Heart left ventricle (tissue), 16 donors: ENCODE measurements at regions of chr10 and their contacts with region 1.

Region 1: GRCh38 chr10:129963641-129964501 is at the start of gene EBF3:
- DNase-seq: peak; percentile 88 to 94 (median 91)
- ATAC-seq: peak; percentile 83 to 87 (median 83)
- H3K4me3 ChIP-seq: peak within 1 kb of the TSS; percentile 63 to 93 (median 73)
- H3K27ac ChIP-seq: peak within 1 kb of the TSS; percentile 79 to 94 (median 90)
- H3K4me1 ChIP-seq: peaks cover 0 to 53% (median 8%) of the 10 kb centered on the region in 12 donors
- H3K27me3 ChIP-seq: peaks cover 16 to 98% (median 56%) of the 10 kb centered on the region in 9 donors
- CTCF ChIP-seq: peak in 1 of 12 donors; percentile 8
- POLR2A ChIP-seq: peak; percentile 67 to 98
- total RNA-seq, gene EBF3: 3.6 to 8.8 (median 7.2) TPM

Region 2: GRCh38 chr10:129258283-129258923 is 705.5 kb before region 1 on chr10:
- intact Hi-C with region 1: loop called in 1 of 10 experiments (anchors 10 kb)
- DNase-seq: no peak
- ATAC-seq: peak in 2 of 4 donors; percentile 38 to 86
- H3K4me3 ChIP-seq: no peak overlapping the region
- H3K27ac ChIP-seq: peak overlapping the region in 9 of 12 donors; percentile 13 to 56 (median 28)
- H3K4me1 ChIP-seq: peaks cover 0 to 14% (median 5%) of the 10 kb centered on the region in 12 donors
- H3K27me3 ChIP-seq: no peaks in the 10 kb centered on the region
- CTCF ChIP-seq: no peak
- POLR2A ChIP-seq: no peak

Region 3: DNA sequence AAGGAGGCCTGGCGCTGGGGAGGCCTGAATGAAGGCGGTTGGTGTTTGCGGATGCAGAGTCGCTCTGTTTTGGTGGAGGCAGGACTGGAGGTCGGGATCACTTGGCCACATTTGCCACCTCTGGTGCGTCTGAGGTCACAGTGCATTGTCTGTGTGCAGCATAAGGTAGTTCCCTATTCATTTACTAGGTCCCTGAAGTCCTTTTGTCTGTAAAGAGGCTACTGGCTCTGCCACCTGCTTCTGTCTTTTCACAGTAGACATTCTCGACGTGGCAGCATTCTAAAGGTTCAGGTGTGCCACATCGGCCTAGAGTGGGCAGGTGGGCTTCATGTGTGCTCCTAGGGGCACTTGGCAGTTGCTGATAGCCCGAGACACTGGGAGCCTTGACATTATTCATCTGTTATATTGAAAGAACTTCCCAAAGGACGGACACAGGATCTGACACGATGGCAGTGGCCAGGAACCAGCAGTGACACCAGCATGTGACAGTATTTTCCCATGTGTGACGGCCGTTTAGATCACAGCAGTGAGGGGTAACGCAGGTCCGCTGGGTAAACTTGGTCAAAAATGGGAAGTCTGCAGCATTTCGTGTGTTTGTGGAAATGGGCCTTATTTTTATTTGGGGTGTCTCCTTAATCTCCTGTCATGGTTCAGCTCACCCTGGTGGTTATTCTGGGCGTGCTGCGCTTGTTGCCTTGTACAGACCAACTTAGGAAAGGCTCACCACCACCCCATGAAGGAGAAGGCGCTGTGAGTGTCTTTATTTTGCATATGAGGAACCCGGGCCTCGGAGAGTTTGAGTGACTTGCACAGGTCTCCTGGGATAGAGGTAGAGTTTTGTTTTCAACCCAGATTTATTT is 490.9 kb before region 1 on chr10:
- intact Hi-C with region 1: loop called in 3 of 10 experiments (anchors 10 kb)
- DNase-seq: no peak
- ATAC-seq: no peak
- H3K4me3 ChIP-seq: no peak overlapping the region
- H3K27ac ChIP-seq: no peak overlapping the region
- H3K4me1 ChIP-seq: peaks cover 0 to 6% (median 0%) of the 10 kb centered on the region in 12 donors
- H3K27me3 ChIP-seq: no peaks in the 10 kb centered on the region
- CTCF ChIP-seq: no peak
- POLR2A ChIP-seq: no peak

Region 4: DNA sequence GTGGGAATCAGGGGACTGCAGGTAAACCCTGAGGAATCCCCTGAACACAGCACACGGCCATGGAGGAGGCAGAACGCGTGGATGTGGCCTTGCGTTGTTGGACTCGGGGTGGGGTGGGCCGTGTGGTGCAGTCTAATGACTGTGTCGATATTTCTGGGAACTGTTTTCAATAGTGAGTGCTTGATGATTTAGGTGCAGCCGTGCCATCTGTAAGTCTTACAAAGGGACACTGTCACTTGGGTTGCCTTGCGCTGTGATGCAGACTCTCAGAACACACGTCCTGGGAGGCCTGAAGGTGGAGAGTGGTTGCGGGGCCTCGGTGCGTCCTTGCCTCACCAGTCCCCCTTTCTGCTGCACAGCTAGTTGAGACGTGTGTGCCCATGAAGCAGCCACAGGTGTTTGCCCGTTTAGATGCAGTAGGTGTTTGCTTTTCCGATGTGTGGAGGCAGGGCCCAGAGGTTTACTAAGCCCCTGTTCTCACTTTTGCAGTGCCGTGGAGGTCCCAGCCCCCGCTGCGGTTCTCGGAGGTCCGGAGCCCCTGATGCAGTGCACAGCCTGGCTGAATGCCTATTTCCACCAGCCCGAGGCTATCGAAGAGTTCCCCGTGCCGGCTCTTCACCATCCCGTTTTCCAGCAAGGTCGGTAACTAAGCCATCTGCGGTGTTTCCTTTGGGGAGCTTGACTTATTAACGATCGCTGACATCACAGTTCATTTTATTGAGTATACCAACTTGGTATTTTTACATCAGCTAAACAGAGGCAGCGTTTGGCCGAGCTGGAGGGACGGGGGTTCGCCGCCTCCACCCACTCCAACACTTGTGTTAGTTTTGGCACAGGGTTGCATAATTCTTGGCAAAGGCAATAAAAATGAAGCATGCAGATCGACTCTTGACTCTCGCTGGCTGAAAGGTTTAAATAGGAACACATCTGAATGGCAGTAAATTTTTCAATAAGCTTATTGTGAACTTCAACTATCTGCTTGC is 256.2 kb before region 1 on chr10:
- intact Hi-C with region 1: loop called in 1 of 10 experiments (anchors 10 kb)
- DNase-seq: peak in 3 of 5 donors; percentile 37 to 59 (median 48)
- ATAC-seq: peak in 2 of 4 donors; percentile 32 to 65
- H3K4me3 ChIP-seq: peak overlapping the region in 1 of 12 donors; percentile 14
- H3K27ac ChIP-seq: no peak overlapping the region
- H3K4me1 ChIP-seq: peaks cover 0 to 18% (median 7%) of the 10 kb centered on the region in 12 donors
- H3K27me3 ChIP-seq: no peaks in the 10 kb centered on the region
- CTCF ChIP-seq: no peak
- POLR2A ChIP-seq: no peak

Region 5: GRCh38 chr10:129888784-129889616 is 74.9 kb before region 1 on chr10:
- intact Hi-C with region 1: loop called in 9 of 10 experiments (anchors 2 to 5 kb)
- DNase-seq: peak; percentile 72 to 84 (median 78)
- ATAC-seq: peak; percentile 25 to 77 (median 74)
- H3K4me3 ChIP-seq: no peak overlapping the region
- H3K27ac ChIP-seq: peak overlapping the region in 4 of 12 donors; percentile 7 to 40 (median 24)
- H3K4me1 ChIP-seq: peaks cover 6 to 56% (median 32%) of the 10 kb centered on the region in 12 donors
- H3K27me3 ChIP-seq: no peaks in the 10 kb centered on the region
- CTCF ChIP-seq: peak; percentile 58 to 80 (median 72)
- POLR2A ChIP-seq: no peak

Region 6: GRCh38 chr10:130757271-130757670 is 793.4 kb after region 1 on chr10:
- intact Hi-C with region 1: no loop called
- DNase-seq: no peak
- ATAC-seq: no peak
- H3K4me3 ChIP-seq: no peak overlapping the region
- H3K27ac ChIP-seq: no peak overlapping the region
- H3K4me1 ChIP-seq: no peaks in the 10 kb centered on the region
- H3K27me3 ChIP-seq: peaks cover 0 to 7% (median 0%) of the 10 kb centered on the region in 9 donors
- CTCF ChIP-seq: no peak
- POLR2A ChIP-seq: no peak